GM10248 (cell line): ENCODE measurements at regions of chr1 and their contacts with region 1.

Region 1: DNA sequence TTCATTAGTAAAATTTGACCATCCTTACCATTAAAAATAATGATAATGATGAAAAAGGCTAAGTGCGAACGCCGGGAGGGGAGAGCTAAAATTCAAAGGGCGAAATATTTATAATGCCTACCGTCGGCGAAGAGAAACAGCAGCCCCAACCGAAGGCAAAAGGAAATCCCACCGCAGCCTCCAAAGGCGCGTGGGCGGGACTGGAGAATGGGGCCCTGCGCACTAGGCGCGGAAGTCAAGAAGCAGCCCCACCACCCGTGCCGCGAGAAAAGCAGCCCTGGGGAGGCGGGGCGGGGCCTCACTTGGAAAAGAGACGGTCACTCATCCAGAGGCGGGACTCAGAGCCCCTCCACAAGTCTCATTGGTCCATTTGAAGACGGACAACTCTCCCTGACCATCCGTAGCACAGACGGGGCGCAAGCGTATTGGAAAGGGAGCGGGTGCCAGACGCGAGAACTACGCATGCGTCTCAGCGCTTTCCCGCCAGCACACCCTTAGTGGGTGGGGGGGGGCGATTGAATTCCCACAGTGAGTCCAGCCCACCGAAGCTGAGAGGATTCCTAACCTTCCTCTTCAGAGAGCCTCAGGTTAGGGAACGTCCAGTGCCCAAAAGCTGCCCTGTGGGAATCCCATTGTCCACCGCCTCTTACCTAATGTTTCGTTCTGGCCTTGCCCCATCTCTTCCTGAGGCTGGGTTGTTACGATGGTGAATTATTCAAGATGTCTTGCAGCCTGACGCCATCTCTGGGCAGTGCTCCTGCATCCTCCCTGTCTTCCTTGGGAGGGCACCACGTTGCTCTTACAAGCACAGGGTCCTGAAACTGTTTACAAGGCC is 19.0 kb downstream of the MTX1 start:
- DNase-seq: peak; percentile 99
- CTCF ChIP-seq: no peak

Region 2: GRCh38 chr1:155193275-155193990 is 34.0 kb before region 1 on chr1:
- CTCF ChIA-PET with region 1: interaction called, 18 read pairs
- POLR2A ChIA-PET with region 1: no interaction called
- DNase-seq: peak; percentile 89
- CTCF ChIP-seq: peak; percentile 99

Region 3: DNA sequence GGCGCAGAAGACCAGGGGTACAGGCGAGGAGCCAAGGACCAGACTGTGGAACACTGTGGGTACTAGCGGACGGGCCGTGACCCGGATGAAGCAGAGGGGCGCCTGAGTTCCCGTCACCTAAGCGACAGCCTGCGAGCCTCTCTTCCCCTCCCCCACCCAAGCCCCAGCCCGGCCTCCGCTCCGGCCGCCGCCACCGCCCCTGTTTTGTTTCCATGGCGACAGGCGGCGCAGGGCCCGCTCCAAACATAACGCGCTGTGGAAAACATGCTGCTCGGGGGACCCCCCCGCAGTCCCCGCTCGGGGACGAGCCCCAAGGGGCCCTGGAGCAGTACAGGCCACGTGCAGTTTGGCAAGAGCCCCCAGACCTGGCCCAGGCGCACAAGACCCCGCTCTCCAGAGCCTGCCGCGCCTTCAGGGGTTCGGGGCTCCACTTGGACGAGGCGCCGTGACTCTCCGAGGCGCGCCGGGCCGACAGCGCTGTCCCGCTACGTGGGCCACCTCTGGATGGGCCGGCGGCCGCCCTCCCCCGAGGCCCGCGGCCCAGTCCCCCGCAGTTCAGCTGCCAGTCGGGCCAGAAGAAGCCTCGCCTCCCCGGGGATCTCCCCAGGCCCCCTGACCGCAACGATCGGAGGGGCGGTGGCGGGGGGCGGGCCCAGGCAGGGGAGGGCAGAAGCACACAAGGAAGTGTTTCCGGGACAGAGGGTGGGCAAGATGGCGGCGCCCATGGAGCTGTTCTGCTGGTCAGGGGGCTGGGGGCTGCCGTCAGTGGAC is 18.8 kb before region 1 on chr1 and contains the start of gene MTX1:
- CTCF ChIA-PET with region 1: interaction called, 88 read pairs
- POLR2A ChIA-PET with region 1: no interaction called
- DNase-seq: peak; percentile 92
- CTCF ChIP-seq: no peak